ENCODE measurements at regions of chr11 and their contacts with region 1.

Region 1: DNA sequence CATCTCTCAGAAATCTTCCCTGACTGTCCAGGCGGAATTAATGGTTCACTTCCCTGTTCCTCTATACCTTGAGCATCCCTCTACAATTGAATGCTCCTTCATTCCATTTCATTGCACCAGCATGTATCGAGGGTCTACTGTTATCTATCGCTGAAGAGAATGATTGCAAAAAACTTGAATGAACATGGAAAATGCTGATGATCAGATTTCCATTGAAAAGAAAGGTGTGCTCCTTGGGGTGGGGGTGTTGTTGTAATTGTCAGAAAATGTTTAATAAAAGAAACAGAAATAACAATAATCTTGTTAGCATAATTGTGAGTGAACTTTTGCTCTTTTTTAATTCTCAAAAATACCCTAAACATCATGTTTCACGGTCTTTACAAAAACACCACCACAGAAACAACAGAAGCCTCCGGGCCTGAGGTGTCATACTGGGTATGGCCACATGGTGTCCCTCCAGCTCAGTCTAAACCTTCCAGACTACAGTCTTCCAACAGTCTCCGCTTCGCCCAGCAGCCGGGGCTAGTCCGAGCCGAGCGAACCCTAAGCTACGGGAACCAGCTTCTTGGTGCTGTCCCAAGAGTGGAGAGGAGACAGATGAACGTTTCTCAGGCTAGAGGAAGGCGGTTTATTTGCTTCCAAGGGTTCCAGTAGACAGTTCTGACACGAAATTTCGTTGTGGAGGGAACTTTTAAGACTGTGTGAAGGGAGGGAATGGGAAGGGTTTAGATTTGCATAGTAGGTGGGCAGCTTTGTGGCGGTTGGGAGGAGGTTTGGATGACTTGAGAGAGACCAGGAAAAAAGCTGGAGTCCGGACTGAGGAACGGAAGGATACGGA is 75.8 kb upstream of the ZBED5 start:
- DNase-seq: peak; percentile 63 to 95
- H3K4me3 ChIP-seq: peak overlapping the region; percentile 28 to 66
- H3K27ac ChIP-seq: peak overlapping the region; percentile 56 to 91
- H3K4me1 ChIP-seq: peaks cover 0 to 16% of the 10 kb centered on the region in 2 donors
- H3K27me3 ChIP-seq: no peaks in the 10 kb centered on the region
- CTCF ChIP-seq: peak; percentile 96 to 98 (median 97)

Region 2: GRCh38 chr11:10792398-10792975 is 141.2 kb before region 1 on chr11:
- intact Hi-C with region 1: loop called (anchors 5 kb)
- DNase-seq: peak; percentile 36 to 92
- H3K4me3 ChIP-seq: peak overlapping the region in 1 of 2 donors; percentile 10
- H3K27ac ChIP-seq: no peak overlapping the region
- H3K4me1 ChIP-seq: peaks cover 0 to 7% of the 10 kb centered on the region in 2 donors
- H3K27me3 ChIP-seq: no peaks in the 10 kb centered on the region
- CTCF ChIP-seq: peak; percentile 93 to 96 (median 96)

Region 3: DNA sequence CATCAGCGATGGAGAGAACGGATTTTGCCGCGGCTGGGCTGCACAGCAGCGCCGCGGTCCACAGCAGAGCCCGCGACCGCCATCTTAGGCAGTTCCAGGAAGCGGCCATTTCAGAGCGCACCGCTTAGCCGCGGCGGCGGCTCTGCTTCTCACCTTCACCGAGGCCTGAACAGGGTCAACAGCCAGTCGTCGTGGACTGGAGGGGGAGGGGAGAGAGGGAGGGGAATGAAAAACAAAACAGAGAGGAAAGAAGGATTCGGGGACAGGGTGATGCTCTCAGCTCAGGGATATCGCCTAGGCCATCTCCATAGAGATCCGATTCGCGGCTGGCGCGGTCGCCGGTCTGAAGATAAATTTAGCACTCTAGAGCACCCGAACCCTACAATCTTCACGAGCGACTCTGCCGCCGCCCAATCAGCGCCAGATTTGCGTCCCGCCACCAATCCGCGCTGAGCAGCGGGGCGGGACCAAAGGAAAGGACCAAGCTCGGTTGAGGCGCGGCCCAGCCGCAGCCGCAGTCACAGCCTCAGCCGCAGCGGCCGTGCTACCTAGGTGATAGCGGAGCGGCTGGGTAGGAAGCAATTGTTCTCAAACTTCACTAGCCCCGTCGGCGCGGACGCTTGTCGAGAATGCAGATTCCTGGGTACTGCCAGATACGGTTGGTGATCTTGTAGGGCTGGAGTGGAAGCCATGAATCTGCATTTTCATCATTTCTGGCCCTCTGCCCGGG is 75.8 kb before region 1 on chr11 and contains the start of gene ZBED5:
- intact Hi-C with region 1: loop called (anchors 1 kb)
- DNase-seq: peak; percentile 95 to 98
- H3K4me3 ChIP-seq: peak within 1 kb of the TSS; percentile 88 to 92
- H3K27ac ChIP-seq: peak within 1 kb of the TSS; percentile 97 to 99
- H3K4me1 ChIP-seq: peaks cover 6 to 21% of the 10 kb centered on the region in 2 donors
- H3K27me3 ChIP-seq: no peaks in the 10 kb centered on the region
- CTCF ChIP-seq: peak in 2 of 3 experiments; percentile 18 to 38
- total RNA-seq, gene ZBED5: 7.8 TPM

Region 4: GRCh38 chr11:10906513-10906912 is 27.2 kb before region 1 on chr11:
- intact Hi-C with region 1: loop called (anchors 2 kb)
- DNase-seq: no peak
- H3K4me3 ChIP-seq: no peak overlapping the region
- H3K27ac ChIP-seq: no peak overlapping the region
- H3K4me1 ChIP-seq: peaks cover 0 to under 1% of the 10 kb centered on the region in 2 donors
- H3K27me3 ChIP-seq: no peaks in the 10 kb centered on the region
- CTCF ChIP-seq: peak in 1 of 3 experiments; percentile 20

Region 5: GRCh38 chr11:11148104-11148509 is 214.4 kb after region 1 on chr11:
- intact Hi-C with region 1: loop called (anchors 10 kb)
- DNase-seq: peak; percentile 43 to 93
- H3K4me3 ChIP-seq: no peak overlapping the region
- H3K27ac ChIP-seq: peak overlapping the region; percentile 46
- H3K4me1 ChIP-seq: peaks cover 1 to 24% of the 10 kb centered on the region in 2 donors
- H3K27me3 ChIP-seq: no peaks in the 10 kb centered on the region
- CTCF ChIP-seq: peak in 2 of 3 experiments; percentile 42 to 46

Region 6: DNA sequence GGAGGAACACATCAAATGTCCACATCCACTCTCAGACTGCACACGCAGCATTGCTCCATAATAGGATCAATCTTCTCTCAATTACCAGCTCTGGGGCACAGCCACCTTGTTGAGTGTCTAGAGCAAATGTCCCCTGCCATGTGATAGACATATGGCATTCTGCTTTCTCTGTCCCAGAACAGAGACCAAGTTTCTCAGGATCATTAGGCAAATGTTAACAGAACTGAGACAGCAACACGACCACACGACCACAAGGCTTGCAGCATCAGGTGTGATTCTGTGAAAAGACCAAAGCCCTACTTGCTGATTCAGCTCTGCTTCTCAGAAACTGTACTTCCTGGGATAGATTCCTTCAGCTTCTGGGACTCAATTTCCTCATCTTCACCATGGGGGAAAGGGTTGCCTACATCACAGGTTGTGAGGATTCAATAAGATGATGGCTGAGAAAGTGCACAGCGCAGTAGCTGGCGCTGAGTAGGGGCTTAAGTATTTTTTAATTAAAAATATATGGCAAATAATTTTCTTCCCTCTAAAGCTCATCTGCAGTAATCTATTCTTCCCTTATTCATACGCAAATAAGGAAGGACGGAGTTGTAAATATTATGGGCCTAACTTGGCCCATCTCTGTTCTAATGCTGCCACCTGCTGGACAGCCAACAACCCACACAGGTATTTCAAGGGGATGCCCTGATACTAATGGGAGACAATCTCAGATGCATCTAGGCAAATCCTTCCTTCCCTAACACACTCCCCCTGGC is 853.8 kb after region 1 on chr11:
- intact Hi-C with region 1: loop called (anchors 2 kb)
- DNase-seq: peak in 1 of 2 donors; percentile 81
- H3K4me3 ChIP-seq: no peak overlapping the region
- H3K27ac ChIP-seq: no peak overlapping the region
- H3K4me1 ChIP-seq: no peaks in the 10 kb centered on the region
- H3K27me3 ChIP-seq: no peaks in the 10 kb centered on the region
- CTCF ChIP-seq: peak; percentile 85 to 86 (median 86)

Measured in ascending aorta (tissue), 2 donors.